MCF 10A (cell line): ENCODE measurements at regions of chr1 and their contacts with region 1.

Region 1: DNA sequence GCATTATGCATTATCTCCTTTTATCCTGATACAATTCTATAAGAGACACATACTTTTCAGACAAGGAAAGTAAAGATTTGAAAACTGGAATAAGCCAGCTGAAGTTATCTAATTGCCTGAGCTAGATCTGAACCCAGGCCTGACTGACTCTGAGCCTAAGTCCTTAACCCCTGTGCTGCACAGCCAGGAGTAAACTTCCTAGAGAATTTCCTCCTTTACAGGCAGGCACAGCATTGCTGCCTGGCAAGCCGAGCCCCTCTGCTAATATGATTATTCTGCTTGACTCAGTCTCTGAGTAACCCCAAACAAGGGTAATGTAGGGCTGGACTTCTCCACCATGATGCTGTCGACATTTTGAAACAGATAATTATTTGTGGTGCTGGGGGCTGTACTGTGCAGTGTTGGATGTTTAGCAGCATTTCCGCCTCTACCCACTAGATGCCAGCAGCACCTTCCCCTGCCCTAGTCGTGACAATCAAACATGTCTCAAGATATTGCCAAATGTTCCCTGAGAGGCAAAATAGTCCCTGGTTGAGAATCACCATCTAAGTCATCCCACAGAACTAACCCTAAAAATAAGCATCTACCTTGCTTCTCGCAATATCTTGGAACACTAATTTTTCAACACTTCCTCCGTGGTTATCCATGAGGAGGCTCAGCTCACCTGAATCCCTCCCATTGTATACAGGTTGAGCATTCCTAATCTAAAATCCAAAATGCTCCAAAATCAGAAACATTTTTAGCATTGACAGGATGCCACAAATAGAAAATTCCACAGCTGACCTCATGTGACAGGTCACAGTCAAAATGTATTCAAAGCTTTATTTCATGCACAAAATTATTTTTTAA is 18.5 kb downstream of the CAMK1G start:
- DNase-seq: peak; percentile 90
- H3K4me3 Mint-ChIP-seq: no peak overlapping the region
- H3K27ac Mint-ChIP-seq: no peak overlapping the region
- H3K4me1 Mint-ChIP-seq: no peaks in the 10 kb centered on the region
- H3K27me3 Mint-ChIP-seq: no peaks in the 10 kb centered on the region
- CTCF ChIP-seq: peak; percentile 92

Region 2: DNA sequence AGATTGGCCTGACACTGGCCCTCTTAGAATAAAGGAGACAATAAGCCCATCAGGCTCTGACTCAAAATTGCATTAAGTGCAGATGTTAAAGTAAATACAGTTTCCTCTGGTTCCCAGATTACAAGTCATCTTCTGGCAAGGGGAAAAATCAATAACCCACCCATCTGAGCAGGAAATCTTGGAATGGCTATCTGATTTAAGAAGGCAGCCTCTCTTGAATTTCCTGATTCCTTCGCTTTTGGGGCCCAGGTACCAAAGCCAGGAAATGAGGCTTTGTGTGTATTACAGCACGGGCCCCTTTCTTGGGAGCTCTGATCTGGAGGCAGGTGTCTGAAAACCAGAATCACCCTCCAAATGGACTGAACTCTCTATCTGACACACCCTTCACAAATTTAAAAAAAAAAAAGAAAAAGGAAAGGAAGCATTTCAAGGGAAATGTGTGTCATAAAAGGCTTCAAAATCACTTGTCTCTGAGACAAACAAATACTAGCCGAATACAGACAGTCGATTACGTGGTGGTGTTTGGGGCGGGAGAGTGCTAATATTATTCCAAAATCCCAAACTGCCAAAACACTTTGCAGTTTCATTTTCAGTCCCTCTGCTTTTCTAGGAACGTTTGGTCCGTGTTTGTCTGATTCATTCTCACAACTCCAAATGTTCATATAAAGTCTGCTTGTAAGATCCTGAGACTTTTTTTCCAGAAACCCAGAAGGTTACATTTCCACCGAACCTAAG is 259.4 kb before region 1 on chr1:
- CTCF ChIA-PET with region 1: no interaction called
- POLR2A ChIA-PET with region 1: no interaction called
- intact Hi-C with region 1: no loop called
- DNase-seq: no peak
- H3K4me3 Mint-ChIP-seq: no peak overlapping the region
- H3K27ac Mint-ChIP-seq: no peak overlapping the region
- H3K4me1 Mint-ChIP-seq: no peaks in the 10 kb centered on the region
- H3K27me3 Mint-ChIP-seq: no peaks in the 10 kb centered on the region
- CTCF ChIP-seq: no peak

Region 3: GRCh38 chr1:209519786-209520185 is 82.2 kb before region 1 on chr1:
- CTCF ChIA-PET with region 1: no interaction called
- POLR2A ChIA-PET with region 1: no interaction called
- intact Hi-C with region 1: no loop called
- DNase-seq: no peak
- H3K4me3 Mint-ChIP-seq: no peak overlapping the region
- H3K27ac Mint-ChIP-seq: no peak overlapping the region
- H3K4me1 Mint-ChIP-seq: peaks cover 5% of the 10 kb centered on the region
- H3K27me3 Mint-ChIP-seq: no peaks in the 10 kb centered on the region
- CTCF ChIP-seq: no peak

Region 4: DNA sequence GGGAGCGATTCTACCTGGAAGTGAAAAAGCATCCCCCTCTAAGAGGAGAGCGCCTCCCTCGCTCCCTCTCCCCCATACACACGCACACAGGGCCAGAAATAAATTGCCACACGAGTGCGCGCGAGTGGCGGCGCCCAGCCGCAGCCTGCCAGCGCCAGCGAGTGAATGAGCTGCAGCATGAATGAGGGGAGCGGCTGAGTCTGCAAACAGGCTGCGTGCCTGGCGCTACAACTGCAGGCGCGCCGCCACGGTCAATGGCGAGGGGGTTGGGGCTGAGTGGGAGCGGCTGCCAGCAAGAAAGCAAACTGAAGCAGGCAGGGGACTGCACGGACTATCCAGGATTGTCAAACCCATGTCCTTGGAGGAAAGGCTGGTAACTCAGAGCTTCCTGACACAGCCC is 16.4 kb before region 1 on chr1:
- CTCF ChIA-PET with region 1: interaction called, 193 read pairs
- POLR2A ChIA-PET with region 1: interaction called, 5 read pairs
- intact Hi-C with region 1: no loop called
- DNase-seq: no peak
- H3K4me3 Mint-ChIP-seq: no peak overlapping the region
- H3K27ac Mint-ChIP-seq: no peak overlapping the region
- H3K4me1 Mint-ChIP-seq: peaks cover 10% of the 10 kb centered on the region
- H3K27me3 Mint-ChIP-seq: no peaks in the 10 kb centered on the region
- CTCF ChIP-seq: no peak

Region 5: DNA sequence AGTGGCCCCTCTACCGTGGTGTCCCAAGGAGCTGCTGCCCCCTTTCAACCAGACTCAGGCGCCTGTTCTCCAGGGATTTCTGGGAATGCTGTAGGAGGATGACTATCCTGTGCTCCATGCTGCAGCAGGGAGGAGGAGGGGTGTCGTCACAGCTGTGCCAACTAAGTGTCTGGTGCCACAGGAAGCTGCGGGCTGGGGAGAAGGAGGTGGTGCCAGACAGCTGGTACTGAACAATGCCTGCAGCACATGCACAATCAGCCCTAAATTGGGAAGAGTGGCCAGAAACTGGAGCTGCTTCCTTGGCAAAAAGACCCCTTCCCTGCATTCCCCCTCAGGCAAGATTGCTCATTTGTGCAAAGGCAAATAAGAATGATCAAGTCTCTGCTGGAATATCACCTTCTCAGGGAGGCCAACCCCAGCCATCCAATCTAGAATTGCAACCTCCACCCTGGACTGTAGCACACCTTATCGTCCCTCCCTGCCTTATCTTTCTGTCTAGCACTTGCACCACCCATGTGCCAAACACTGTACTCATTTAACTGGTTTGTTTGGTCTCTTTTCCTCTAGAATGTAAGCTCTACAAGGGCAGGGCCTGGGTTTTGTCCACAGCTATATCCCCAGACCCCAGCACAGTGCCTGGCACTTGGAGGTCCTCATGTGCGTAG is 16.9 kb after region 1 on chr1:
- CTCF ChIA-PET with region 1: interaction called, 140 read pairs
- POLR2A ChIA-PET with region 1: interaction called, 43 read pairs
- intact Hi-C with region 1: no loop called
- DNase-seq: peak; percentile 63
- H3K4me3 Mint-ChIP-seq: no peak overlapping the region
- H3K27ac Mint-ChIP-seq: peak overlapping the region; percentile 24
- H3K4me1 Mint-ChIP-seq: peaks cover 43% of the 10 kb centered on the region
- H3K27me3 Mint-ChIP-seq: no peaks in the 10 kb centered on the region
- CTCF ChIP-seq: no peak

Region 6: DNA sequence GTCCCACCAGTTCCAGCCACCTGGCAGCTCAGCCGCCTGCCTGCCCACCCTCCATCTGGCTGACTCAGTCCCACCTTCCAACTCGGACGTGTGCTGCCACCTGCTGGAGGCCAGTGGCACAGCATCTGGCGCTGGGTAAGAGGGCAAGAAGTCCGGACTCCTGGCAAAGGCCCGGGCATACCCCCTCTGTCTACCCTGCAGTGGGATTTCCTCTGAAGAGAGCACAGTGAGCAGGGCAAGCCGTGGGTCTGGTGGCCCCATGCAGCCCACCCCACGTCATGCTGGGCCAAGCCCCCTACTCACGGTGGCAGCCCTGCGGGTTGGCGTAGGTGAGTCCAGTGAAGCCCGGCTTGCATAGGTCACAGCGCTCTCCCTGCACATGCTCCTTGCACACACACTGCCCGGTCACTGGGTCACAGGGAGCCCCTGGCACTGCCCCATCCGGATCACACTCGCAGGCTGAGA is 25.7 kb after region 1 on chr1:
- CTCF ChIA-PET with region 1: interaction called, 140 read pairs
- POLR2A ChIA-PET with region 1: interaction called, 7 read pairs
- intact Hi-C with region 1: loop called (anchors 1 kb)
- DNase-seq: peak; percentile 84
- H3K4me3 Mint-ChIP-seq: no peak overlapping the region
- H3K27ac Mint-ChIP-seq: peak overlapping the region; percentile 11
- H3K4me1 Mint-ChIP-seq: peaks cover 40% of the 10 kb centered on the region
- H3K27me3 Mint-ChIP-seq: no peaks in the 10 kb centered on the region
- CTCF ChIP-seq: peak; percentile 99

Region 7: DNA sequence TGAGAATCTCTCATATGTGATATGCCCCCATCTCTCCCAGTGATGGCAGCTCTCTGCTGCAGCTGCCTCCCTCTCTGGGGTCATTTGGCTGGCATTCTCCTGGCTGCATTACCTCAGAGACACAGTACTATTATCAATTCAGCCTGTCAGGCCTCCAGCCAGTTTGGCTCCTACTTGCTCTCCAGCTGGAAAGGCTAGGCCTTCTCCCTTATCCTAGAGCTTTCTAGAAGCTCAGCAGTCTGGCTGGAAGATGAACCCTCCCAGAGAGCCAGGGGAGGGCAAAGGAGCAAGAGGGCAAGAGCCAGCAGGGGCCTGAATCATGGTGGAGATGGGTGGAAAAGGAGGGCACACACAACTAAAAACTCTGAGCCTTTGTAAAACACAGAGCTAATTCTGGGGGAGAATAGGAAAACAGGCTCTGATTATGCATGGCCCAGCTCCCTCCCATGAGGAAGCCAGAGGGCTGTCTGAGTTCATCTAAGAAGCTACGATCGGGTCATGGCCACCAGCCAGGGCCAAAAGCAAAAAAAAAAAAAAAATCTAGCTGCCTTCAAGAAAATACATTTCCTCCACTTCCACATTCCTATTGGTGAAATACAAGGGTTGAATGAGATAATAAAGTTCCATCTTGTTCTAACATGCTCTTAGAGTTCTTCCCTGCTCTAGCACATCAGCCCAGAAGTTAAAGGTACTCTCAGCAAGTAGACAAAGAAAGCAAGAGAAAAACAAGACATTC is 41.4 kb after region 1 on chr1:
- CTCF ChIA-PET with region 1: interaction called, 21 read pairs
- POLR2A ChIA-PET with region 1: interaction called, 5 read pairs
- intact Hi-C with region 1: no loop called
- DNase-seq: peak; percentile 61
- H3K4me3 Mint-ChIP-seq: peak overlapping the region; percentile 24
- H3K27ac Mint-ChIP-seq: peak overlapping the region; percentile 68
- H3K4me1 Mint-ChIP-seq: peaks cover 69% of the 10 kb centered on the region
- H3K27me3 Mint-ChIP-seq: no peaks in the 10 kb centered on the region
- CTCF ChIP-seq: no peak

Region 8: DNA sequence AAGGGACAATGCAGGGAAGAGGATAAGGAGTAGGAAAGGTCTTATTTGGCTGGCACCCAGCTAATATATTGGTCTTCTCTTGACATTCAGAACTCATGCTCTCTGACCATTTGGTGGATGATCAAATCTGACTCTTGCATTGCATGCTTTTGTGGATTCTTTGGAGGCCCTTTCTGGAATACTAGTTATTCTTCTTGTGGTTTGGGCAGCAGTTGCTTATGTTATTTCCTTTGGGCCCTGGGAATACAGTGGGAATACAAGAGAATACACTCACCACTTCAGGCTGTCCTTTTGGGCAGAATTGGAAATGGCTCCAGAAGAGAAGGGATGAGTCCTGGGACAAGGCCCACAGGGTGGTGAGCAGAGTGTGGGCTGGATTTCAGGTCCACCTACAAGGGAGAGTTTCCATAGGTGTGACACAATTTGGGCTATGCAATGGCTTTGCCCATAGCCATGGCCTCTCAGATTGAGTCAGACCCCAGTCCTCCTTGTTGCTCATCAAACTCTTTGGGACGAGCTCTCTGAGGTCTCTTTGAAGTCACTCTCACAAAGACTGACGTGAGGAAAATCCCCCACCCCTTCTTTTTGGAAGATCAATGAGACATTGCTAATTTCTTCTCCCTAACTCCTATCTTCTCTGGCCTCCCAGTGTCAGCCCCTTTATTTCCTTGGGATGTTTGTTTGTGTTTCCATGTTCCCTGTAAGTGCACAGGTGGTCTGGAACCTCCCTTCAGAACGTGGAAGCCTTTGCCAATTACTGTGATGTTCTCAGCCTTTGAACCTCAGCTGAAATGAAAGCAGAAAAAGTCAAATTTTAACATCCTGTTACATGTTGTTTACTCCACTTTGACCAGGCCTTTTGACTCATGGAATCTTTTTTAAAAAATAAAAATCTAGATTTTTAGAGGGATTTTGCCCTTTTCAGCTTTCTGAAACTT is 122.0 kb after region 1 on chr1:
- CTCF ChIA-PET with region 1: interaction called, 15 read pairs
- POLR2A ChIA-PET with region 1: no interaction called
- intact Hi-C with region 1: no loop called
- DNase-seq: no peak
- H3K4me3 Mint-ChIP-seq: no peak overlapping the region
- H3K27ac Mint-ChIP-seq: no peak overlapping the region
- H3K4me1 Mint-ChIP-seq: no peaks in the 10 kb centered on the region
- H3K27me3 Mint-ChIP-seq: no peaks in the 10 kb centered on the region
- CTCF ChIP-seq: no peak